ENCODE measurements at regions of chr4 and their contacts with region 1.

Region 1: GRCh38 chr4:76969941-76970529 is 20.5 kb downstream of the SEPTIN11 start:
- DNase-seq: no peak
- H3K4me3 ChIP-seq: no peak overlapping the region
- H3K27ac ChIP-seq: no peak overlapping the region
- H3K4me1 ChIP-seq: no peaks in the 10 kb centered on the region
- H3K27me3 ChIP-seq: no peaks in the 10 kb centered on the region
- CTCF ChIP-seq: no peak

Region 2: GRCh38 chr4:76993787-76994641 is 24.0 kb after region 1 on chr4:
- CTCF ChIA-PET with region 1: no interaction called
- POLR2A ChIA-PET with region 1: interaction called, 12 read pairs
- intact Hi-C with region 1: no loop called
- DNase-seq: no peak
- H3K4me3 ChIP-seq: no peak overlapping the region
- H3K27ac ChIP-seq: no peak overlapping the region
- H3K4me1 ChIP-seq: no peaks in the 10 kb centered on the region
- H3K27me3 ChIP-seq: no peaks in the 10 kb centered on the region
- CTCF ChIP-seq: no peak

Measured in PC-9 (cell line).